WTC11 (cell line): ENCODE measurements at regions of chr11 and their contacts with region 1.

Region 1: DNA sequence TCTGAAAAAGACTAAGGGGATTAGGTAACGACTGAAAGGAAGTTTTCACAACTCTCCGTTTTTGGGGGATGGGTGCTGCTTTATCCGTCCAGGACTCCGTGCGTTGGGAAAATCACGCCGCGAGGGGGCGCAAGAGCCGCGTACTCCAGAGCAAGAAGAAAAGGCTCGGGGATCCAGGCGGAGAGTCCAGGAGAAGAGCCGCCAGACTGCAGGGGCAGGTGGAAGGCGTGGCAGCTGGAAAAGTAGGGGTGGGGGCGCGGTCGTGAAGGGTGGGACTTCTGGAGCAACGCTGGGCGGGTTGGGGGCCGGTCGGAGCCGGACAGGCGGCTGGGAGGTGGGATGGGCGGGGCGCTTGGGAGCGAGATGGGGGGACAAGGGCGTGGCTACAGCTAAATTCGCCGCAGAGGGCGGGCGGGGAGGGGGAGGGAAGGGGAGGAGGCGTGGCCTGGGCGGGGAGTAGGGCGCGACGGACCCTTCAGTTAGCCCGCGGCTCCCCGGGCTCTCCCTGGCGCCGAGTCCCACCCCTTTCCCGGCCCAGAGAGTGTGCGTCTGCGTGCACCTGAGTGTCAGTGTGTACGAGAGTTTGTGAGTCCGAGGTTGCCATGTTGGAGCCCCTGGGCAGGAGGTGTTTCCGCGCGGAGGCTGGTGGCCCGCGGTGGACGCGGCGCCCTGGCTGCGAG is 613 bp upstream of the ARHGEF17 start:
- DNase-seq: peak; percentile 99
- ATAC-seq: peak; percentile 78
- H3K4me3 Mint-ChIP-seq: peak overlapping the region; percentile 76
- H3K27ac Mint-ChIP-seq: peak overlapping the region; percentile 85
- H3K4me1 Mint-ChIP-seq: peaks cover 16% of the 10 kb centered on the region
- H3K27me3 Mint-ChIP-seq: peaks cover 39% of the 10 kb centered on the region
- CTCF ChIP-seq: peak; percentile 57

Region 2: DNA sequence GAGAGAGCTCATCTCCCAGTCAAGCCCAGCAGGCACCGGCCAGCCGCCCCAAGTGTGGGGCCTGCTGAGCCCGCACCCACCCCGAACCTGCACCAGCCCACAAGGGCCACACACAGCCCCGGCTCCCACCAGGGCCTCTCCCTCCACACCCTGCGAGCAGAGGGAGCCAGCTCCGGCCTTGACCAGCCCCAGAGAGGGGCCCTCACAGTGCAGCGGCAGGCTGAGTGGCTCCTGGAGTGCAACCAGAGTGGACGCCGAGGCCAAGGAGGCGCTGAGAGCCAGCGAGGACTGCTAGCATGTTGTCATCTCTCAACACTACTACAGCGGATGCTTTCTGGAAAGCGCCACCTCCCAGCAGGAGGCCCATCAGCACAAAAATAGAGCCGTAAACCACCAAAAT is 1463.6 kb before region 1 on chr11:
- CTCF ChIA-PET with region 1: no interaction called
- POLR2A ChIA-PET with region 1: no interaction called
- DNase-seq: peak; percentile 63
- ATAC-seq: peak; percentile 76
- H3K4me3 Mint-ChIP-seq: no peak overlapping the region
- H3K27ac Mint-ChIP-seq: no peak overlapping the region
- H3K4me1 Mint-ChIP-seq: peaks cover 27% of the 10 kb centered on the region
- H3K27me3 Mint-ChIP-seq: peaks cover 24% of the 10 kb centered on the region
- CTCF ChIP-seq: no peak

Region 3: DNA sequence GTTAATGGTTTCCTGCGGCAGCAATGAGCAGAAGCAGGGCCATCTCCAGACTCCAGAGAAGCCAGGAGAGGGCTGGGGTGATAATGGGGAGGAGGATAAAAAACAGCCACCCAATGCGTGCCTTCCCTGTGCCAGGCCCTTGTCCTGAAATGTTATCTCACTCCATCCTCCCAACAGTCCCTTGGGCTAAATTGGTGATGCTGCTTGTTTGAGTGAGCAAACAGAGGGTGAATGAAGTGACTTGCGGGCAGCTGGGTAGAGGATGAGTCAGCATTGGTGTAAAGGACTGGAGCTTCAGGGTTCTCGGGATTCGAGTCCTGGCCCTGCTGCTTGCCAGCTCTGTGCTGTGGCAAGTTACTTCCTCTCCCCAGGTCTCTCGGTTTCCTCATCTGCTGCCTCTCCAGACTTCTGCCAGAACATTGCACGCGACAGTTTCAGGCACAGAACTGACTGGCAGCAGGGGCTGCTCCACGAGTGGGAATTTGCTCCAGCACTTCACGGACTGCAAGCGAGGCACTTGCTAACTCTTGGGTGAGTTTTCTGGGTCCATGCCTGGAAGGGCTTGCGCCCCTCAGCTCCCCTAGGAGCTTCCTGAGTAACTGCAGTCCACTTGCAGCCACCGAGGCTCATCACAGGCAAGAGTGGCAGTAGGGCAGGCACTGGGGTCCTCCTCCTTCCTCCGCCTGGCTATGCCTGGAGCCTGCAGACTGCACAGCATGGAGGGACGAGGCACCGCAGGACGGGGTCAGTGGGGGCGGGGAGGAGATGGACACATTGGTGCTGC is 35.3 kb before region 1 on chr11 and contains the start of gene P2RY6:
- CTCF ChIA-PET with region 1: interaction called, 22 read pairs
- POLR2A ChIA-PET with region 1: no interaction called
- DNase-seq: peak; percentile 13
- ATAC-seq: no peak; the same call in 1 of the 2 replicates
- H3K4me3 Mint-ChIP-seq: no peak within 1 kb of the TSS
- H3K27ac Mint-ChIP-seq: no peak within 1 kb of the TSS; the same call in 1 of the 2 replicates
- H3K4me1 Mint-ChIP-seq: peaks cover 34% of the 10 kb centered on the region
- H3K27me3 Mint-ChIP-seq: 0 out of 2 replicates have a peak, but pooled peaks cover under 1% of the 10 kb centered on the region
- CTCF ChIP-seq: no peak
- total RNA-seq, gene P2RY6: 0.11 to 0.16 TPM in 2 of 3 replicates, not detected in the other

Region 4: GRCh38 chr11:73325036-73325981 is 17.8 kb after region 1 on chr11:
- CTCF ChIA-PET with region 1: interaction called, 47 read pairs
- POLR2A ChIA-PET with region 1: interaction called, 7 read pairs
- DNase-seq: no peak
- ATAC-seq: no peak
- H3K4me3 Mint-ChIP-seq: no peak overlapping the region
- H3K27ac Mint-ChIP-seq: no peak overlapping the region
- H3K4me1 Mint-ChIP-seq: peaks cover 44% of the 10 kb centered on the region
- H3K27me3 Mint-ChIP-seq: peaks cover 24% of the 10 kb centered on the region
- CTCF ChIP-seq: no peak

Region 5: DNA sequence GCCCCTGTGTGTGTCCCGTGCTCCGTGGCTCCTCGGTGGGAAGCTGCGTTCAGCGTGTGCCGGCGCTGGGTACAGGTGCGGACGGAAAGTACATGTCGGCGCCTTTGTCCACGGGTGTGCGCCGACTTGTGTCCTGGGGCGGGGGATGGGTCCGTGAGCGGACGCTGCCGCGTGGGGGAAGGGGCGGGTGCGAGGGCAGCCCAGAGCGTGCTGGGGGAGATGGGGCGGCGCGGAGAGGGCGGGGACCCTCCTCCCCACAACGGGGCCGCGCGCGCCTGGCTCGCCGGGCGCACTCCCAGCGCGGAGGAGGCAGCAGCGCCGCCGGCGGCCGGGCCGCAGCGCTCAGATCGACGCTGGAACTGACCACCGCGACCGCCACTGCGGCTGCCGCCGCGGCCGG is 35.2 kb after region 1 on chr11:
- CTCF ChIA-PET with region 1: interaction called, 270 read pairs
- POLR2A ChIA-PET with region 1: interaction called, 6 read pairs
- DNase-seq: peak; percentile 53
- ATAC-seq: peak; percentile 63
- H3K4me3 Mint-ChIP-seq: peak overlapping the region; percentile 69
- H3K27ac Mint-ChIP-seq: no peak overlapping the region
- H3K4me1 Mint-ChIP-seq: peaks cover 18% of the 10 kb centered on the region
- H3K27me3 Mint-ChIP-seq: peaks cover 33% of the 10 kb centered on the region
- CTCF ChIP-seq: no peak

Region 6: DNA sequence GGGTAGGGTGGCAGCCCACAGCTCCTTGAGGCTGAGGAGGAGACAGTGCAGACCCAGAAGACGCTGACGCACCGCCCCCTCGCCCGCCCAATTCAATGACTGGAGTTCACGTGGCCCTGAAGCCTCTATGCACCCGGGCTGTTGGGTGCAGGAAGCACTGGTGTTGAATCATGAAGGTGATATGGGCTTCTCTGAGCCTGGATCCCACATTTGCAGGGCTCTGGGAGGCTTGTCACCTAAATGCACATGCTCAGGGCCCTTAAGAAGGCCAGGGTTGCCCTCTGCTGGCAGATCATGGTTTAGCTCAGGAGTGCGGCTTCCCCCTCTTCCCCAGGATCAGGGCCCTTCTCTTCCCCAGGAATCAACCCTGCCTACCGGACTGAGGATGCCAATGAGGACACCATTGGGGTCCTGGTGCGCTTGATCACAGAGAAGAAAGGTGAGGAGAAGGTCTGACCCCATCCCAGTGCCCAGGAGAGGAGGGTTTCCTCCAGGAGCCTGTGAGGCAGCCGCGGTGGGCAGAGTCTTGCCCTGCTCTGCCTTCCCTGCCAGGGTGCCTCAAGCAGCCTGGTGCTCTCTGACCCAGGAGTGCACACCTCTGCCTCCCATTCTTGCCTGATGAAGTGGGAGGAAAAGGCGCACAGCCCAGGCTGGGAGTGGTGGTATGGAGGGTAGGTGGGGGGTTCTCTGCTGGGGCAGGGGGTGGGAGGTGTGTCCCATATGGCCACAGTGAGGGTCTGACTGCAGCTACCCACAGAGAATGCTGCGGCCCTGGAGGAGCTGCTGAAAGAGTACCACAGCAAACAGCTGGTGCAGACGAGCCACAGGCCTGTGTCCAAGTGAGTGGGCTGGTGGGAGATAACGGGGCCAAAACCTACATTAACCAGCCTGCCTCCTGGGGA is 86.3 kb after region 1 on chr11:
- CTCF ChIA-PET with region 1: interaction called, 26 read pairs
- POLR2A ChIA-PET with region 1: no interaction called
- DNase-seq: peak; percentile 87
- ATAC-seq: peak; percentile 84
- H3K4me3 Mint-ChIP-seq: no peak overlapping the region
- H3K27ac Mint-ChIP-seq: no peak overlapping the region
- H3K4me1 Mint-ChIP-seq: no peaks in the 10 kb centered on the region
- H3K27me3 Mint-ChIP-seq: no peaks in the 10 kb centered on the region
- CTCF ChIP-seq: peak; percentile 68